Heart left ventricle (tissue), 16 donors: ENCODE measurements at regions of chr14 and their contacts with region 1.

Region 1: GRCh38 chr14:23984891-23985602 is 3.7 kb upstream of the DHRS4L2 start:
- DNase-seq: peak in 3 of 5 donors; percentile 20 to 43 (median 36)
- ATAC-seq: peak in 3 of 4 donors; percentile 20 to 54 (median 30)
- H3K4me3 ChIP-seq: no peak overlapping the region
- H3K27ac ChIP-seq: peak overlapping the region in 2 of 12 donors; percentile 17 to 38
- H3K4me1 ChIP-seq: peaks cover 0 to 25% (median 11%) of the 10 kb centered on the region in 12 donors
- H3K27me3 ChIP-seq: no peaks in the 10 kb centered on the region
- CTCF ChIP-seq: no peak
- POLR2A ChIP-seq: no peak

Region 2: DNA sequence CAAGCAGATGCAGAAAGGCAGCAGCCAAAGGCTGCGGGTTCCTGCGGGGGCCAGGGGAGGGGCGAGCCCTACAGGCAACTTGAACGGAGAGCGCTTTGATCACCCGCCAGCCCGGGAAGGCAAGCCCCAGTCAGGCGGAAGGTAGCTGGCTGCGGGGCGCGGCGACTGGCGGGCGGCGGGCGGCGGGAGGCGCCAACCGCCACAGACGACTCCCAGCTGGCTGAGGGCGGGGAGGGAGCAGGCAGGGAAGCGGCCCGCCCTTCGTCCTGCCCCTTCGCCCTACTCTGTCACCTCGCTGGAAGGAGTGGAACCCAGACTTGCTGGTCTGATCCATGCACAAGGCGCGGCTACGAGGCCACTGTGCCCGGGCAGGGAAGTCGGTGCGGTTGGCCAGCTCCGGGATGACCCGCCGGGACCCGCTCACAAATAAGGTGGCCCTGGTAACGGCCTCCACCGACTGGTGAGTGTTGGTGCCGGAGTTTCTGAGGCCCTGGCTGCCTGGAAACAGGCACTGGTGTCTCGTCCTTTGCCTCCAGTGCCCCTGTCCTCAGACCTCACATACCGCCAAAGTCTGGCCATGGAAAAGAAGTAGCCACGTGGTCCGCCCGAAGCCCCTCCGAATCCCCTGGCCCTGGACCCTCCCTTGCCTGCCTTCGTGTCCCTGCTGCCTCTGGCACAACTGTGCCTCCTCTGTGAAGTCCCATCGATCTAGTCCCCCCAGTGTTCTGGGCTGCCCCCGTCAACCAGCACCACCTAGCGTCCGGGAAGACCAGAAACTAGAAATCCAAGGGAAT is 51.3 kb after region 1 on chr14:
- intact Hi-C with region 1: loop called in 3 of 10 experiments (anchors 5 kb)
- DNase-seq: peak; percentile 81 to 91 (median 86)
- ATAC-seq: peak; percentile 91 to 97 (median 96)
- H3K4me3 ChIP-seq: peak overlapping the region; percentile 46 to 82 (median 66)
- H3K27ac ChIP-seq: peak overlapping the region; percentile 83 to 97 (median 92)
- H3K4me1 ChIP-seq: peaks cover 0 to 18% (median 3%) of the 10 kb centered on the region in 12 donors
- H3K27me3 ChIP-seq: no peaks in the 10 kb centered on the region
- CTCF ChIP-seq: peak; percentile 61 to 90 (median 72)
- POLR2A ChIP-seq: peak in 1 of 2 donors; percentile 28

Region 3: GRCh38 chr14:24093901-24094761 is 109.1 kb after region 1 on chr14 and contains the start of gene PCK2:
- intact Hi-C with region 1: loop called in 2 of 10 experiments (anchors 5 to 10 kb)
- DNase-seq: peak; percentile 85 to 94 (median 91)
- ATAC-seq: peak; percentile 76 to 92 (median 90)
- H3K4me3 ChIP-seq: peak within 1 kb of the TSS; percentile 73 to 94 (median 80)
- H3K27ac ChIP-seq: peak within 1 kb of the TSS; percentile 77 to 96 (median 94)
- H3K4me1 ChIP-seq: peaks cover 0 to 26% (median 14%) of the 10 kb centered on the region in 12 donors
- H3K27me3 ChIP-seq: no peaks in the 10 kb centered on the region
- CTCF ChIP-seq: peak in 1 of 12 donors; percentile 14
- POLR2A ChIP-seq: peak in 1 of 2 donors; percentile 62
- total RNA-seq, gene PCK2: 2.1 to 14.6 (median 3.9) TPM

Region 4: GRCh38 chr14:24114536-24115450 is 129.7 kb after region 1 on chr14 and contains the starts of genes DCAF11 and NRL:
- intact Hi-C with region 1: no loop called
- DNase-seq: peak; percentile 99
- ATAC-seq: peak; percentile 93 to 95 (median 94)
- H3K4me3 ChIP-seq: peak within 1 kb of the TSS; percentile 48 to 79 (median 71)
- H3K27ac ChIP-seq: peak within 1 kb of the TSS; percentile 95 to 100 (median 97)
- H3K4me1 ChIP-seq: peaks cover 0 to 31% (median 18%) of the 10 kb centered on the region in 12 donors
- H3K27me3 ChIP-seq: no peaks in the 10 kb centered on the region
- CTCF ChIP-seq: peak in 2 of 12 donors; percentile 22 to 36
- POLR2A ChIP-seq: peak in 1 of 2 donors; percentile 9
- total RNA-seq, gene DCAF11: 55.1 to 117 (median 75.0) TPM
- total RNA-seq, gene NRL: 1.3 to 2.9 (median 2.1) TPM